CD8-positive, alpha-beta T cell (primary cell): ENCODE measurements at regions of chr7 and their contacts with region 1.

Region 1: DNA sequence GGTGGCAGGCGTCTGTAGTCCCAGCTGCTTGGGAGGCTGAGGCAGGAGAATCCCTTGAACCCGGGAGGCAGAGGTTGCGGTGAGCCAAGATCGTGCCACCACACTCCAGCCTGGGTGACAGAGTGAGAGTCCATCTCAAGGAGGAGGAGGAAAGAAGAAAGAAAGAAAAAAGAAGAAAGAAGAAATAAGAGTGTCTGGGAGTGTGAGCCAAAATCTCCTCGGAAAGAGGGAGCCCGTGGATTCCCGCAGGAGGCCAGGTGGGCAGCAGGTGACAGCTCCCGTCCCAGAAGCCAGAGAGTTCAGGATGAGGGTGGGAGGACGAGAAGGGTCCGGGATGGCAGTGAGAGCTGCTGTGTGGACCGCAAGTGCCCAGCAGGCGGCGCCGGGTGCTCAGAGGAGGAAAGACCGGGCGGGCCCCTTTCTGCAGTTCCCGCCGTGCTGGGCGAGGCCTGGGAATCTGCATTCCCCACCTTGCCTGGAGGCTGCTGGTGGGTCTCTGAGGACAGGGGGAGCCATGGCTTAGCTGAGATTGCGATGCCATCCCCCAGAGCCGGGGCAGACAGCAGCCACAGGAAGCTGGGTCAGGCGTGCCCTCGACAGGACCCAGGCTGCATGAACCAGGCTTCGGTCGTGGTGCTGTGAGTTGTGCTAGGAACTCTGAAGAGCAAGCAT is 17.1 kb upstream of the AMZ1 start:
- DNase-seq: peak; percentile 37 to 83 (median 73)
- ATAC-seq: peak; percentile 87
- H3K4me3 ChIP-seq: no peak overlapping the region
- H3K4me3 Mint-ChIP-seq: no peak overlapping the region
- H3K27ac ChIP-seq: no peak overlapping the region
- H3K27ac Mint-ChIP-seq: no peak overlapping the region
- H3K4me1 ChIP-seq: peaks cover 8% of the 10 kb centered on the region
- H3K4me1 Mint-ChIP-seq: peaks cover 6% of the 10 kb centered on the region
- H3K27me3 ChIP-seq: no peaks in the 10 kb centered on the region
- H3K27me3 Mint-ChIP-seq: peaks cover 21% of the 10 kb centered on the region
- CTCF ChIP-seq: peak; percentile 87

Region 2: GRCh38 chr7:2680792-2681490 is 10.1 kb after region 1 on chr7:
- CTCF ChIA-PET with region 1: interaction called, 18 read pairs
- POLR2A ChIA-PET with region 1: no interaction called
- intact Hi-C with region 1: no loop called
- DNase-seq: peak in 7 of 9 experiments; percentile 22 to 71 (median 60)
- ATAC-seq: no peak
- H3K4me3 ChIP-seq: no peak overlapping the region
- H3K4me3 Mint-ChIP-seq: no peak overlapping the region
- H3K27ac ChIP-seq: no peak overlapping the region
- H3K27ac Mint-ChIP-seq: no peak overlapping the region
- H3K4me1 ChIP-seq: no peaks in the 10 kb centered on the region
- H3K4me1 Mint-ChIP-seq: no peaks in the 10 kb centered on the region
- H3K27me3 ChIP-seq: peaks cover 0 to 3% of the 10 kb centered on the region in 2 experiments
- H3K27me3 Mint-ChIP-seq: peaks cover 9% of the 10 kb centered on the region
- CTCF ChIP-seq: peak; percentile 37

Region 3: DNA sequence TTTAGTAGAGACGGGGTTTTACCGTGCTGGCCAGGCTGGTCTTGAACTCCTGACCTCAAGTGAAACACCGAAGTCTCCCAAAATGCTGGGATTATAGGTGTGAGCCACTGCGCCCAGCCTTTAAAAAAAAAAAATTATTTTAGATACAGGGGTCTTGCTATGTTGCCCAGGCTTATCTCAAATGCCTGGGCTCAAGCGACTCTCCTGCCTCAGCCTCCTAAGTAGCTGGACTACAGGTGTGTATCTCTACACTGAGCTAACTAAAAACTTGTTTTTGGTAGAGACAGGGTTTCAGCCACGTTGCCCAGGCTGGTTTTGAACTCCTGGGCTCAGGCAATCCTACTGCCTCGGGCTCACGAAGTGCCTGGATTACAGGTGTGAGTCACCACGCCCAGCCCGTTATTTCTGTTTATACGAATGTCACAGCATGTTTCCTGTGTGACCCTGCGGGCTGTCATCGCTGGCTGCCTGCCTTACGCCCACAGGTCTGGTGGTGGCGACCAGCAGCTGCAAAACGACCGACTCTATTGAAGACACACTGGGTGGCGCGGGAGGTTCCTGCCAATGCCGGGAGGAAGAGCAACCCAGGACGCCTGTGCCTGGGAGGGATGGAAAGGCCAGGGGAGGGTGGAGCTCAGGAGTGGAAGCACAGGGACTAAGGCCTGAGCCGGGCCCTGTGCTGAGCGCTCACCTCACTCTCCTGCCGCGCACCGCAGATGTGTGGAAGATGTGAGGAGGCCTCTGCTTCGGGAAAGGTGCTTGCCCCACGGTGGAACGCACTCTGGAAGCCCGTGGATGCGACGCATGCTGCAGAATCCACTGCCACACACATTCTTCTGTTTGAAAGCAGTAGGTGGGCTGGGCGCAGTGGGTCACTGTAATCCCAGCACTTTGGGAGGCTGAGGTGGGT is 50.0 kb after region 1 on chr7:
- CTCF ChIA-PET with region 1: interaction called, 264 read pairs
- POLR2A ChIA-PET with region 1: no interaction called
- intact Hi-C with region 1: loop called (anchors 1 kb)
- DNase-seq: peak; percentile 24 to 86 (median 66)
- ATAC-seq: peak; percentile 32
- H3K4me3 ChIP-seq: no peak overlapping the region
- H3K4me3 Mint-ChIP-seq: peak overlapping the region; percentile 42
- H3K27ac ChIP-seq: no peak overlapping the region
- H3K27ac Mint-ChIP-seq: peak overlapping the region; percentile 89
- H3K4me1 ChIP-seq: peaks cover 42% of the 10 kb centered on the region
- H3K4me1 Mint-ChIP-seq: peaks cover 55% of the 10 kb centered on the region
- H3K27me3 ChIP-seq: no peaks in the 10 kb centered on the region
- H3K27me3 Mint-ChIP-seq: peaks cover 9% of the 10 kb centered on the region
- CTCF ChIP-seq: no peak